Heart right ventricle (tissue), 16 donors: ENCODE measurements at regions of chr6 and their contacts with region 1.

Region 1: DNA sequence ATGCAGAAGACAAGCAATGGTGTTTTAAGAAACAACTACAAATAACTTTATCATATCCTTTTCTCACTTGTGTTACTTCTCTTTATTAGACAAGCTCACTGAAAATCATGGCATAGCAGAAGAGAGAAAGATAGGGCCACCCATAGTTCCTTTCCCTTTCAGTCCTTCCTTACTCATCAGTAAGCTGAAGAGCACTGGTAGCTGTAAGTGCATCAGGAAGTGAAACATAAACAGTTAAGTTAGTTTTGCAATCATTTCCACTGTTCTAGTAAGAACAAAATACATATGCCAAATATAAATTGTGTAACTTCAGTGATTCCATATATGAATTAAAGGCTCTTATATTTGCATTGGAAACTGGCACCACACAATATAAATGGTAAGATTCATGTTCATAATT is 220.1 kb downstream of the HACE1 start:
- DNase-seq: no peak
- ATAC-seq: peak in 4 of 8 donors; percentile 46 to 59 (median 52)
- H3K4me3 ChIP-seq: no peak overlapping the region
- H3K27ac ChIP-seq: peak overlapping the region in 8 of 10 donors; percentile 10 to 71 (median 49)
- H3K4me1 ChIP-seq: peaks cover 0 to 46% (median 16%) of the 10 kb centered on the region in 9 donors
- H3K27me3 ChIP-seq: no peaks in the 10 kb centered on the region
- CTCF ChIP-seq: no peak

Region 2: GRCh38 chr6:104525677-104526312 is 113.9 kb before region 1 on chr6:
- intact Hi-C with region 1: loop called in 1 of 10 experiments (anchors 5 kb)
- DNase-seq: peak; percentile 55 to 59
- ATAC-seq: peak; percentile 69 to 91 (median 87)
- H3K4me3 ChIP-seq: peak overlapping the region in 7 of 10 donors; percentile 3 to 44 (median 40)
- H3K27ac ChIP-seq: no peak overlapping the region
- H3K4me1 ChIP-seq: peaks cover 0 to 21% (median 11%) of the 10 kb centered on the region in 9 donors
- H3K27me3 ChIP-seq: peaks cover 0 to 17% (median 0%) of the 10 kb centered on the region in 7 donors
- CTCF ChIP-seq: peak; percentile 82 to 96 (median 92)

Region 3: GRCh38 chr6:104682722-104683643 is 43.3 kb after region 1 on chr6:
- intact Hi-C with region 1: no loop called
- DNase-seq: peak; percentile 18 to 59
- ATAC-seq: peak in 3 of 8 donors; percentile 37 to 53 (median 46)
- H3K4me3 ChIP-seq: no peak overlapping the region
- H3K27ac ChIP-seq: no peak overlapping the region
- H3K4me1 ChIP-seq: peaks cover 0 to 5% (median 0%) of the 10 kb centered on the region in 9 donors
- H3K27me3 ChIP-seq: no peaks in the 10 kb centered on the region
- CTCF ChIP-seq: peak; percentile 45 to 89 (median 65)

Region 4: GRCh38 chr6:104705095-104705707 is 65.5 kb after region 1 on chr6:
- intact Hi-C with region 1: loop called in 2 of 10 experiments (anchors 5 to 10 kb)
- DNase-seq: peak in 1 of 2 donors; percentile 15
- ATAC-seq: peak in 7 of 8 donors; percentile 57 to 93 (median 85)
- H3K4me3 ChIP-seq: no peak overlapping the region
- H3K27ac ChIP-seq: peak overlapping the region; percentile 27 to 78 (median 58)
- H3K4me1 ChIP-seq: peaks cover 0 to 24% (median 7%) of the 10 kb centered on the region in 9 donors
- H3K27me3 ChIP-seq: no peaks in the 10 kb centered on the region
- CTCF ChIP-seq: no peak

Region 5: GRCh38 chr6:104750449-104750848 is 110.8 kb after region 1 on chr6:
- intact Hi-C with region 1: no loop called
- DNase-seq: no peak
- ATAC-seq: no peak
- H3K4me3 ChIP-seq: no peak overlapping the region
- H3K27ac ChIP-seq: no peak overlapping the region
- H3K4me1 ChIP-seq: no peaks in the 10 kb centered on the region
- H3K27me3 ChIP-seq: no peaks in the 10 kb centered on the region
- CTCF ChIP-seq: no peak

Region 6: DNA sequence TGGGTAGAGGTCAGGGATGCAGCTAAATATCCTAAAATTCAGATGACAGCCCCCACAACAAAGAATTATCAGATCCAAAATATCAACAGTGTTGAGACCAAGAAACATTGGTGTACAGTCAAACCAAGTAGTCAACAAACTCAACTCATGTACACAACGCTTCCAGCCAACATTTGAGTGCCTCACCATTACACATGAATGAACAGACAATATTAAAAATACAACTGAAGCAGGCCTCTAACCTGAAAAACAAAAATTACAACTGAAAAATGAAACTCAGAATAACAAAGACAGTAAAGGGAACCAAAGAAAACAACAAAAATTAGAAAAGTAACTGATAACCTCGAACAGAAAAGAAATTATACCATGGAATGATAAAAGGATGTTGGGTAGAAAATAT is 173.9 kb after region 1 on chr6:
- intact Hi-C with region 1: no loop called
- DNase-seq: no peak
- ATAC-seq: no peak
- H3K4me3 ChIP-seq: no peak overlapping the region
- H3K27ac ChIP-seq: no peak overlapping the region
- H3K4me1 ChIP-seq: no peaks in the 10 kb centered on the region
- H3K27me3 ChIP-seq: no peaks in the 10 kb centered on the region
- CTCF ChIP-seq: no peak

Region 7: DNA sequence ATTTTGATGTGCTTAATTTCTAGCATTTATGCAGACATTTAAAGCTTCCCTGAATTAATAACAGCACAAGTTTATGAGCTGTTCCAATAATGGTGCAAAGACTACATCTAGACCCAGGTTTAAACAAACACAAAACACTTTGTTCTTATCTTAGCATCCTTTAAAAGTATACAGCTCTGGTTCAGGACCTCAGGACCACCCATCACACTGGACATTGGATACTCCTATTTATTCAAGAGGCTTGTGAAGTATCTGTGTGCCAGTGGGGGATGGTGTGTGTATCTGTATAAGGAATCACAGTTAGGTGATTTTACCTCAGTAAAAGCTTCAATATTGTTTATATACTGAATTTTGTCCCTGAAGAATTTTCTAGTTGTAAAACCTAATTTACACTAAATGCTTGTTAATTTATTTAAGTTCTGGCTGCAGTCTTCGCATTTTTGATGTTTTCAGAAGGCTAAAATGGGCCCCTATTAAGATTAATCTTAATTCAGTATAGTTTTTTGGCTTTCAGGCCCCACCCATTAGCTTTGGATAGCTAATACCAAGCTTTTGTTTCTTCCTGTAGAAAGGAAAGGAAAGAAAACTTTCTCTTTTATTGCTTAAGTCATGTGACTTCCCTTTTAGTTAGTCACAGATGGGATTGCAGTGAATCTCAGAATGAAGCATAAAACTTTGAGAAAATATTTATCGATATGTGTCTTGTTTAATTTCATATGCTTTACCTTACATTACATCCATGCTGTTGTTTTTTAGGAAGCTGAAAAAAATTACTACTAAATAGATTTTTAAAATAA is 330.3 kb after region 1 on chr6:
- intact Hi-C with region 1: no loop called
- DNase-seq: no peak
- ATAC-seq: no peak
- H3K4me3 ChIP-seq: no peak overlapping the region
- H3K27ac ChIP-seq: no peak overlapping the region
- H3K4me1 ChIP-seq: no peaks in the 10 kb centered on the region
- H3K27me3 ChIP-seq: peaks cover 0 to 12% (median 0%) of the 10 kb centered on the region in 7 donors
- CTCF ChIP-seq: no peak